Head of caudate nucleus (tissue), 42 donors: ENCODE measurements at regions of chr19 and their contacts with region 1.

Region 1: GRCh38 chr19:17075035-17075863 is at the starts of genes HAUS8 and MYO9B:
- DNase-seq: peak; percentile 97 to 100 (median 100)

Region 2: GRCh38 chr19:17121736-17122323 is 46.6 kb after region 1 on chr19:
- intact Hi-C with region 1: loop called (anchors 5 kb)
- DNase-seq: no peak

Region 3: GRCh38 chr19:17282488-17283255 is 207.4 kb after region 1 on chr19:
- intact Hi-C with region 1: loop called (anchors 10 kb)
- DNase-seq: peak; percentile 64 to 91 (median 80)